ENCODE measurements at regions of chr2 and their contacts with region 1.

Region 1: GRCh38 chr2:32572737-32573136 is 55.1 kb upstream of the TTC27 start:
- DNase-seq: peak in 1 of 35 experiments; percentile 13
- ATAC-seq: peak; percentile 48 to 86 (median 72)
- H3K4me3 ChIP-seq: no peak overlapping the region
- H3K4me3 Mint-ChIP-seq: peak overlapping the region in 1 of 3 donors; percentile 43
- H3K27ac ChIP-seq: no peak overlapping the region
- H3K27ac Mint-ChIP-seq: peak overlapping the region; percentile 51 to 56
- H3K4me1 ChIP-seq: peaks cover 9 to 13% of the 10 kb centered on the region in 2 experiments
- H3K4me1 Mint-ChIP-seq: peaks cover 35 to 39% (median 38%) of the 10 kb centered on the region in 3 donors
- H3K27me3 ChIP-seq: no peaks in the 10 kb centered on the region
- H3K27me3 Mint-ChIP-seq: no peaks in the 10 kb centered on the region

Region 2: GRCh38 chr2:32534831-32535230 is 37.9 kb before region 1 on chr2:
- CTCF ChIA-PET with region 1: no interaction called
- POLR2A ChIA-PET with region 1: interaction called in 1 of 2 experiments, 13 read pairs
- DNase-seq: no peak
- ATAC-seq: no peak
- H3K4me3 ChIP-seq: no peak overlapping the region
- H3K4me3 Mint-ChIP-seq: no peak overlapping the region
- H3K27ac ChIP-seq: no peak overlapping the region
- H3K27ac Mint-ChIP-seq: no peak overlapping the region
- H3K4me1 ChIP-seq: no peaks in the 10 kb centered on the region
- H3K4me1 Mint-ChIP-seq: peaks cover 11 to 17% (median 11%) of the 10 kb centered on the region in 3 donors
- H3K27me3 ChIP-seq: no peaks in the 10 kb centered on the region
- H3K27me3 Mint-ChIP-seq: no peaks in the 10 kb centered on the region